CD4-positive, alpha-beta memory T cell (primary cell): ENCODE measurements at regions of chr14 and their contacts with region 1.

Region 1: GRCh38 chr14:68911594-68912227 is 67.4 kb downstream of the ACTN1 start:
- DNase-seq: peak; percentile 70 to 76 (median 73)
- H3K4me3 ChIP-seq: no peak overlapping the region
- H3K4me3 Mint-ChIP-seq: no peak overlapping the region
- H3K27ac ChIP-seq: no peak overlapping the region
- H3K27ac Mint-ChIP-seq: peak overlapping the region in 3 of 7 donors; percentile 35 to 64 (median 43)
- H3K4me1 ChIP-seq: peaks cover 6% of the 10 kb centered on the region
- H3K4me1 Mint-ChIP-seq: peaks cover 6 to 16% (median 9%) of the 10 kb centered on the region in 4 donors
- H3K27me3 ChIP-seq: no peaks in the 10 kb centered on the region
- H3K27me3 Mint-ChIP-seq: no peaks in the 10 kb centered on the region

Region 2: DNA sequence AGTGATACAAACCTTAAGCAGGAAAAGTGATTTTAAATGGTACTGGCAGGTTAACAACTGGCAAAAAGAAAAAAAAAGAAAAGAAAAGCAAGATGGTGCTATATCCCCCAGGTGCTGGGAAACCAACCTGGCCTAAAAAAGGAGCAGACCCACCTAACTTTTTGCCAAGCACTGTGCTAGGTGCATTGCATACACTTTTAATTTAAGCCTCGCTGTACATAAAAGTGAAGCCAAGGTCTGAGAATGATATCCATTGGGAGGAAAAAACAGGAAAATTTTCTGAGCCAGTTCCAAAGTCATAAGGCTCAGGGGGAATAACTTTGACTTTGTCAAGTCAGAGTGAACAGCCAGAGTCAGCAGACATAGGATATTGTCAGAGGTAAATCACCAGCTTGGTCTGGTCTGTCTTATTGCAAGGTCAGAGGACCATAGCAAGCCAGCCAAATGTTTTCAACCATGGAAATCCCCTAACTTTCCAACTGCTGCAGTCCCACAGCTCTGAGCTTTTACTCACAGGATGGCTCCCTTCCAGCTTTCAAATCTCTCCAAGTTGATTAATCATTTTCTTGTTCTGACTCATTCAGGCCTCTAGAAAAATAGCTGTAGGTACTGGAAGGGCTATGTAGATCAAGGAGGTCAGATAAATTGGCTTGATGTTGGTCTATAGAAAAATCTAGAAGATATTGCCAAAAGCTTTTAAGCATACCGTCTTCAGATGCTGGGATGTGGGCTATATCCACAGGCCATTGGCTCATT is 679.2 kb before region 1 on chr14:
- CTCF ChIA-PET with region 1: no interaction called
- POLR2A ChIA-PET with region 1: no interaction called
- intact Hi-C with region 1: no loop called
- DNase-seq: no peak
- H3K4me3 ChIP-seq: no peak overlapping the region
- H3K4me3 Mint-ChIP-seq: no peak overlapping the region
- H3K27ac ChIP-seq: no peak overlapping the region
- H3K27ac Mint-ChIP-seq: no peak overlapping the region
- H3K4me1 ChIP-seq: no peaks in the 10 kb centered on the region
- H3K4me1 Mint-ChIP-seq: no peaks in the 10 kb centered on the region
- H3K27me3 ChIP-seq: no peaks in the 10 kb centered on the region
- H3K27me3 Mint-ChIP-seq: no peaks in the 10 kb centered on the region

Region 3: DNA sequence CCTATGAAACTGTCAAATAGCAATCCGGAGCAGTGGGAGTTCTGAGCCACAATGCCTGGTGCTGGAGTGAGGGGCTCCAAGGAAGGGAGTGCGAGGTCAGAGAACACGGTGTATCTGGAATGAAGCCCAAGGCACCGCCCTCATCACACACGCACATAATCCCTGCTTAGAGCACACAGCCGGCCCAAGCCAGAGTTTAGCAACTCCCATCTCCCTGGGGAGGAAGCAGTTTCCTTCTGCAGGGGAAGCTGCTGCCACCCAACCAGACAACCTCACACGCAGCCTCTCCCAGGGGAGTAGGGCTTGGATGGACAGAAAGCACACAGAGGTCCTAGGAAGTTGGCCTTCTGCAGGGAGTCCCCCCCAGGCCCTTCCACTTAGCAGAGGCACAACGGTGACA is 36.1 kb after region 1 on chr14:
- CTCF ChIA-PET with region 1: no interaction called
- POLR2A ChIA-PET with region 1: no interaction called
- intact Hi-C with region 1: no loop called
- DNase-seq: no peak
- H3K4me3 ChIP-seq: no peak overlapping the region
- H3K4me3 Mint-ChIP-seq: no peak overlapping the region
- H3K27ac ChIP-seq: no peak overlapping the region
- H3K27ac Mint-ChIP-seq: peak overlapping the region in 1 of 7 donors; percentile 35
- H3K4me1 ChIP-seq: peaks cover 16% of the 10 kb centered on the region
- H3K4me1 Mint-ChIP-seq: peaks cover 13 to 80% (median 30%) of the 10 kb centered on the region in 4 donors
- H3K27me3 ChIP-seq: no peaks in the 10 kb centered on the region
- H3K27me3 Mint-ChIP-seq: no peaks in the 10 kb centered on the region

Region 4: DNA sequence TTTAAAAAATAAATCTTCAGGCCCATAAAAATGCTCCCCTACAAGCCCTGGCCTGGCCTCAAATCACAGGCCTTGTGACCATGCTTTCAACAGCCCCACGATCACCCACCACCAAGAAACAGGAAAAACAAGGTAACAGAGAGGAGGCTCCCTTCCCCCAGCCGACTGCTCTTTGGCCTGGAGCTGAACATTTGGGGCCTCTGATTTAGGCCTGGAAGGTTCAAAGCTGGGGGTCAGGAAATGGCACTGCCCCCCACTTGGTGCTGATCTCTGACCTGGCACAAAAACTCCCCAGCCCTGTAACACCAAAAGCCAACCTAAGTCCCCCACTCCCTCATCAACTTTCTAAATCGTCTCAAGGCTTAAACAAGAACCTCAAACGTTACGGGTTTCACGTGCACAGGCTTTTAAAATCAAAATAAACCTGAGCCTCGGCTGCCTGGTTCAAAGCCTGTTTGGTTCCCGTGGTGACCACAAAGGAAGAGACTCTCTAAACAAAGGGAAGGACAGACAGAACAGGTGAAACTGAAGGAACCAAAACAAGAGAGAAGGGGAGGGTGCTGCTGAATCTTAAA is 58.4 kb after region 1 on chr14:
- CTCF ChIA-PET with region 1: interaction called, 14 read pairs
- POLR2A ChIA-PET with region 1: interaction called, 5 read pairs
- intact Hi-C with region 1: loop called (anchors 2 kb)
- DNase-seq: peak; percentile 63 to 80 (median 76)
- H3K4me3 ChIP-seq: no peak overlapping the region
- H3K4me3 Mint-ChIP-seq: peak overlapping the region; percentile 68 to 89 (median 76)
- H3K27ac ChIP-seq: peak overlapping the region; percentile 57
- H3K27ac Mint-ChIP-seq: peak overlapping the region; percentile 96 to 99 (median 98)
- H3K4me1 ChIP-seq: peaks cover 78% of the 10 kb centered on the region
- H3K4me1 Mint-ChIP-seq: peaks cover 50 to 94% (median 68%) of the 10 kb centered on the region in 4 donors
- H3K27me3 ChIP-seq: no peaks in the 10 kb centered on the region
- H3K27me3 Mint-ChIP-seq: no peaks in the 10 kb centered on the region

Region 5: GRCh38 chr14:68986926-68987652 is 75.4 kb after region 1 on chr14:
- CTCF ChIA-PET with region 1: interaction called, 11 read pairs
- POLR2A ChIA-PET with region 1: no interaction called
- intact Hi-C with region 1: no loop called
- DNase-seq: no peak
- H3K4me3 ChIP-seq: no peak overlapping the region
- H3K4me3 Mint-ChIP-seq: no peak overlapping the region
- H3K27ac ChIP-seq: no peak overlapping the region
- H3K27ac Mint-ChIP-seq: peak overlapping the region in 3 of 7 donors; percentile 30 to 68 (median 34)
- H3K4me1 ChIP-seq: no peaks in the 10 kb centered on the region
- H3K4me1 Mint-ChIP-seq: peaks cover 5 to 7% (median 6%) of the 10 kb centered on the region in 4 donors
- H3K27me3 ChIP-seq: no peaks in the 10 kb centered on the region
- H3K27me3 Mint-ChIP-seq: no peaks in the 10 kb centered on the region

Region 6: GRCh38 chr14:69055999-69056788 is 144.5 kb after region 1 on chr14:
- CTCF ChIA-PET with region 1: interaction called, 21 read pairs
- POLR2A ChIA-PET with region 1: no interaction called
- intact Hi-C with region 1: loop called (anchors 1 kb)
- DNase-seq: peak in 2 of 5 donors; percentile 4 to 5
- H3K4me3 ChIP-seq: no peak overlapping the region
- H3K4me3 Mint-ChIP-seq: no peak overlapping the region
- H3K27ac ChIP-seq: no peak overlapping the region
- H3K27ac Mint-ChIP-seq: peak overlapping the region in 3 of 7 donors; percentile 10 to 42 (median 23)
- H3K4me1 ChIP-seq: no peaks in the 10 kb centered on the region
- H3K4me1 Mint-ChIP-seq: peaks cover 0 to 7% (median 3%) of the 10 kb centered on the region in 4 donors
- H3K27me3 ChIP-seq: no peaks in the 10 kb centered on the region
- H3K27me3 Mint-ChIP-seq: no peaks in the 10 kb centered on the region

Region 7: DNA sequence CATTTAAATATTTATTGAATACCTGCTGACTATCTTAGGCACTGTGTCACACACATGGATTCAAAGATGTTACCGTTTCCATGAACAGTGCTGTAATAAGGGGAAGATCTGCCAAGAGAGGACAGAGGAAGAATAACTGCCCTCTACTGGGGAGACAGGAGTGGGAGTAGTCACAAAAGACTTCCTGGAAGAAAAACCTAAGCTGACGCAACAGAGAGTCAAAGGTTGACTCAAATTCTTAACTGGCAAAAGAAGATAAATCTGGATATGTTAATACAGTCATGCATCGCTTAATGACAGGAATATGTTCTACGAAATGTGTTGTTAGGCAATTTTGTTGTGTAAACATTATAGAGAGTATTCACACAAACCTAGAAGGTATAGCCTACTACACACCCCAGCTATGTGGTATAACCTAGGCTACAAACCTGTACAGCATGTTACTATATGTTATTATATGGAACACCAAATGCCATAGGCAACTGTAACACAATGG is 189.7 kb after region 1 on chr14:
- CTCF ChIA-PET with region 1: interaction called, 6 read pairs
- POLR2A ChIA-PET with region 1: no interaction called
- intact Hi-C with region 1: loop called (anchors 1 kb)
- DNase-seq: peak in 2 of 5 donors; percentile 13 to 14
- H3K4me3 ChIP-seq: no peak overlapping the region
- H3K4me3 Mint-ChIP-seq: no peak overlapping the region
- H3K27ac ChIP-seq: no peak overlapping the region
- H3K27ac Mint-ChIP-seq: peak overlapping the region in 2 of 7 donors; percentile 6 to 57
- H3K4me1 ChIP-seq: no peaks in the 10 kb centered on the region
- H3K4me1 Mint-ChIP-seq: peaks cover 11 to 16% (median 12%) of the 10 kb centered on the region in 4 donors
- H3K27me3 ChIP-seq: no peaks in the 10 kb centered on the region
- H3K27me3 Mint-ChIP-seq: no peaks in the 10 kb centered on the region